ENCODE measurements at regions of chr19 and their contacts with region 1.

Region 1: GRCh38 chr19:1767464-1767933 is 14.2 kb downstream of the ONECUT3 start:
- DNase-seq: peak; percentile 24
- H3K4me3 ChIP-seq: no peak overlapping the region
- H3K27ac ChIP-seq: no peak overlapping the region
- H3K4me1 ChIP-seq: no peaks in the 10 kb centered on the region
- H3K27me3 ChIP-seq: peaks cover 43% of the 10 kb centered on the region in 2 experiments
- CTCF ChIP-seq: peak; percentile 88 to 95
- POLR2A ChIP-seq: no peak

Region 2: DNA sequence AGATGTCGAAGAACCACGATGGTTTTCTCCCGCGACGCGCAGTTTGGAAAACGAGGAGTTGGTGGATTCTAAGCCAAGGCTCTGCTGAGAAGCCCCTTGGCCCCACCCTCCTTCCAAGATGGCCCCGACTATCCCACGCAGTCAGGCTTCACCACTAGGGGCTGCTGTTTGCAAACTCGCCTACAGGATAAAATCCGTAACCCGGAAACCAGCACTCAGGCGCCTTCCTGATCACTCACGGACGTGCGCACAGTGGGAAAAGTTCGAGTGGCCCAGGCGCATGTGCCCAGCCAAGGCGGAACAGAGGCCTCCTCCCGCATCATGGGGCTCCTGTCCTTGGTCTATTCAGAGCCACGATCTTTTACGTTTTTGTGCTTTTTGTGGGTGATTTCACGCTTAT is 143.0 kb before region 1 on chr19:
- CTCF ChIA-PET with region 1: no interaction called
- POLR2A ChIA-PET with region 1: no interaction called
- dilution Hi-C with region 1: no loop called
- intact Hi-C with region 1: loop called (anchors 5 kb)
- DNase-seq: peak; percentile 67
- H3K4me3 ChIP-seq: no peak overlapping the region
- H3K27ac ChIP-seq: peak overlapping the region; percentile 29
- H3K4me1 ChIP-seq: no peaks in the 10 kb centered on the region
- H3K27me3 ChIP-seq: no peaks in the 10 kb centered on the region
- CTCF ChIP-seq: peak; percentile 79 to 83
- POLR2A ChIP-seq: no peak

Region 3: DNA sequence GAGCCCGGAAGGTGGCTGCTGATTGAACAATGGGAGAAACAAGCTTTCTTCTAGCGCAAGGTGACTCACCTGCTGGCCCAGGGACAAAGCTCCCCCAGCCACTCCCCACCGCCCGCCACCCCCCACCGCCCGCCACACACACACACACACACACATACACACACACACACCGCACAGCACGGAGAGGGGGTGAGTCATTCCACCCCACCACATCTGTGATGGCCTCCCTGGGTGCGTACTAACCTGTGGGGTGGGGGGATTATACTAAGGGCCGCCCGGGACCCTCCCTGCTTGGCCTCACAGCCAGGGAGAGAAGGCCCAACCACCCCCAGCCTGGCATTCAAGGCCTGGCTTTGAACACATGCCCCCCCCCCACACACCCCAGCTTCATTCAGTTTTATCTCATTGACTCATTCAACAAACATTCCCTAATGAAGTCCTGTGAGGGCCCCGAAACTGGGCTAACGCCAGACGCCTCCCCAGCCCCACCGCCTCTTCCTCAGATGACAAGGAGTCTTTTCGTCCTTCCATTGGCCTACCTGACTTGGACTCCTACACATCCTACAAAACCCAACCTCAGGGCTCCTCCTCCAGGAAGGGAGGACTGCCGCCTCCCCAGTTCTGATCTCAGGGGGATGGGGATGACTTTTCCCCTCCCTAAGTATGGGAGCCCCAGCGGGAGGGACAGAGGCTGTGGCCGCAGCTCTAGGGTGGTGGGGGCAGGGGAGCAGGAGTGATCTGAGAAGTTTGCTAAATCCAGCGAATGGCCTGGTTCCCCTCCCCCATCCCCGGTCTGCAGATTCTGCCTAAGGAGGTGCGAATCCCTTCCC is 20.0 kb before region 1 on chr19:
- CTCF ChIA-PET with region 1: interaction called, 12 read pairs
- POLR2A ChIA-PET with region 1: no interaction called
- dilution Hi-C with region 1: no loop called
- intact Hi-C with region 1: no loop called
- DNase-seq: peak; percentile 31
- H3K4me3 ChIP-seq: no peak overlapping the region
- H3K27ac ChIP-seq: no peak overlapping the region
- H3K4me1 ChIP-seq: peaks cover 16% of the 10 kb centered on the region
- H3K27me3 ChIP-seq: peaks cover 44 to 47% of the 10 kb centered on the region in 2 experiments
- CTCF ChIP-seq: no peak
- POLR2A ChIP-seq: no peak

Region 4: GRCh38 chr19:1780272-1780958 is 12.9 kb after region 1 on chr19:
- CTCF ChIA-PET with region 1: interaction called, 26 read pairs
- POLR2A ChIA-PET with region 1: no interaction called
- dilution Hi-C with region 1: no loop called
- intact Hi-C with region 1: no loop called
- DNase-seq: no peak
- H3K4me3 ChIP-seq: no peak overlapping the region
- H3K27ac ChIP-seq: no peak overlapping the region
- H3K4me1 ChIP-seq: no peaks in the 10 kb centered on the region
- H3K27me3 ChIP-seq: peaks cover 17 to 30% of the 10 kb centered on the region in 2 experiments
- CTCF ChIP-seq: no peak
- POLR2A ChIP-seq: no peak

Measured in endothelial cell of umbilical vein (primary cell).